ENCODE measurements at regions of chr7 and their contacts with region 1.

Region 1: DNA sequence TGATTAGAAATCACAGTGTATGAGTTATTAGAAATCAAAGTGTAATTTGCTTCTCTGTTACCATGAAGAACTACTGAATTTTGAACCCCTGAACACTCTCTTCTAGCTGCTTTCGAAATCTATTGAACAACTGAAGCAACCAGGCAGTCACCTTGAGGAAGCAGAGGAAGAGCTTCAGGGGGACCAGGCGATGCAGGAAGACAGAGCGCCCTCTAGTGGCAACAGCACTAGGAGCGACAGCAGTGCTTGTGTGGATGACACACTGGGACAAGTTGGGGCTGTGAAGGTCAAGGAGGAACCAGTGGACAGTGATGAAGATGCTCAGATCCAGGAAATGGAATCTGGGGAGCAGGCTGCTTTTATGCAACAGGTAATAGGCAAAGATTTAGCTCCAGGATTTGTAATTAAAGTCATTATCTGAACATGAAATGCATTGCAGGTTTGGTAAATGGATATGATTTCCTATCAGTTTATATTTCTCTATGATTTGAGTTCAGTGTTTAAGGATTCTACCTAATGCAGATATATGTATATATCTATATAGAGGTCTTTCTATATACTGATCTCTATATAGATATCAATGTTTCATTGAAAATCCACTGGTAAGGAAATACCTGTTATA is 170.7 kb downstream of the HDAC9 start:
- DNase-seq: peak; percentile 25 to 43 (median 40)
- H3K4me3 ChIP-seq: no peak overlapping the region
- H3K4me3 Mint-ChIP-seq: no peak overlapping the region
- H3K27ac ChIP-seq: no peak overlapping the region
- H3K27ac Mint-ChIP-seq: no peak overlapping the region
- H3K4me1 ChIP-seq: no peaks in the 10 kb centered on the region
- H3K4me1 Mint-ChIP-seq: peaks cover 0 to 4% (median 2%) of the 10 kb centered on the region in 4 donors
- H3K27me3 ChIP-seq: no peaks in the 10 kb centered on the region
- H3K27me3 Mint-ChIP-seq: no peaks in the 10 kb centered on the region

Region 2: DNA sequence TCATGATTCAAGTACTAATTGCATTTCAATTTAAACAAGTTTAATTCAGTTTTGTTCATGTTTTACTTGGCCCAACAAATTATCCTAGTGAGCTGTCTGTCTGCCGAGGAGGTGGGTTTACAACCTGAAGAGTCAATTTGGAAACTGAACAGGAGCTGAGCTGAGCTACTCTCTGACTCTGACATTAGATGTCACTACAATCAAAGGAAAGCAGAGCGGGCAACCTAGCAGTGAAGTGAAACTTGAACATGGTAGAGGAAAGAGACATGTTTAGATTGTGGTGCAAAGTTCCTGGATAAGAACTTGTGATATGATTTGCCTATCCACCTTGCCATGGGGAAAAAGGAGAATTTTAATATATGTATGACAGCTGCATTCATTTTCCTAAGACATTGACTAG is 1774.9 kb before region 1 on chr7:
- CTCF ChIA-PET with region 1: no interaction called
- POLR2A ChIA-PET with region 1: no interaction called
- intact Hi-C with region 1: loop called (anchors 10 kb)
- DNase-seq: peak in 4 of 5 donors; percentile 24 to 39 (median 34)
- H3K4me3 ChIP-seq: no peak overlapping the region
- H3K4me3 Mint-ChIP-seq: no peak overlapping the region
- H3K27ac ChIP-seq: no peak overlapping the region
- H3K27ac Mint-ChIP-seq: no peak overlapping the region
- H3K4me1 ChIP-seq: no peaks in the 10 kb centered on the region
- H3K4me1 Mint-ChIP-seq: peaks cover 9 to 18% (median 12%) of the 10 kb centered on the region in 4 donors
- H3K27me3 ChIP-seq: no peaks in the 10 kb centered on the region
- H3K27me3 Mint-ChIP-seq: peaks cover 1 to 3% of the 10 kb centered on the region in 2 donors

Region 3: DNA sequence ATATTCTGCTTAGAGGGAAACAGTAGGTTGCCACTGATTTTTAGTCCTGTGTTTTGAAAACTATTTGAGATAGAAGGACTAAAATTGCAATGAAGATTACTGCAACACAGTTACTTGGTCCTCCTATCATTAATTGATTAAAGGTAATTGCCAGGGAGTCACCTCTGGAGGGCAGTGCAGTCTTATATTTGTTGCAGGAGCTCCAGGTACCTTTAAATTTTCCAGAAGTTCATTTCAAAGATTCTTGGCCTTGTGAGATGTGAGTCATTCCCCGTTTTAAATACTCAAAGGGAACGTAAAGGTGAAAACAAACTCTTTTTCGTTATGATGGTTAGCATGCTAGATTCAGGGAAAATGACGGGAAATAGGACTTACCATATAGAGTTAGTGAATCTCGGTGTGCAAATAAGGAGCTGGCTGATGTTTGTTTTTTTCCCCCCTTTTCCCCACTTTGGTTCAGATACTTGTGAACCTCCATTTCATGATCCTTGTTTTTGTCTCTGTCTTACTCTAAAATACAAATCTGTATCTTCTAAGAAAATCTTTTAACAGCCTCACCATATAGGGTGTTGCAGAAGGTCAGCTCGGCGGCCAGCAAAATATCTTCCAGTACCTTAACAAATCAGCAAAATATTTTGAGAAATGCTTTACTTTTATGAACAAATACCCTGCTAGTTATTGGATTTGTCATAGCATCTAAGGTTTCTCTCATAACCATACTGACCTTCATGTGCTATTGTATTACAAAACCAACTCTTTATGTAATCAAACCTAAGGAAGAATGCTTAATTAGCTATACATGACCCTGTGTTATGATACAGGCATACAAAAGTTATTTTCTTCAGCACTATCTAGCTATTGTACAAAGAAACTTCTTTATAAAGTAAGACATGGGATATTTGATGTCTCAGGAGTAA is 313.6 kb before region 1 on chr7:
- CTCF ChIA-PET with region 1: interaction called, 4 read pairs
- POLR2A ChIA-PET with region 1: no interaction called
- intact Hi-C with region 1: loop called (anchors 5 kb)
- DNase-seq: no peak
- H3K4me3 ChIP-seq: no peak overlapping the region
- H3K4me3 Mint-ChIP-seq: no peak overlapping the region
- H3K27ac ChIP-seq: no peak overlapping the region
- H3K27ac Mint-ChIP-seq: no peak overlapping the region
- H3K4me1 ChIP-seq: peaks cover 5% of the 10 kb centered on the region
- H3K4me1 Mint-ChIP-seq: peaks cover 1 to 6% (median 3%) of the 10 kb centered on the region in 4 donors
- H3K27me3 ChIP-seq: no peaks in the 10 kb centered on the region
- H3K27me3 Mint-ChIP-seq: peaks cover 0 to 3% of the 10 kb centered on the region in 2 donors

Region 4: GRCh38 chr7:18590744-18591340 is 75.4 kb before region 1 on chr7:
- CTCF ChIA-PET with region 1: interaction called, 3 read pairs
- POLR2A ChIA-PET with region 1: no interaction called
- intact Hi-C with region 1: loop called (anchors 1 kb)
- DNase-seq: peak in 2 of 5 donors; percentile 7 to 8
- H3K4me3 ChIP-seq: no peak overlapping the region
- H3K4me3 Mint-ChIP-seq: no peak overlapping the region
- H3K27ac ChIP-seq: no peak overlapping the region
- H3K27ac Mint-ChIP-seq: no peak overlapping the region
- H3K4me1 ChIP-seq: no peaks in the 10 kb centered on the region
- H3K4me1 Mint-ChIP-seq: no peaks in the 10 kb centered on the region
- H3K27me3 ChIP-seq: no peaks in the 10 kb centered on the region
- H3K27me3 Mint-ChIP-seq: no peaks in the 10 kb centered on the region